ENCODE measurements at regions of chr2 and their contacts with region 1.

Region 1: DNA sequence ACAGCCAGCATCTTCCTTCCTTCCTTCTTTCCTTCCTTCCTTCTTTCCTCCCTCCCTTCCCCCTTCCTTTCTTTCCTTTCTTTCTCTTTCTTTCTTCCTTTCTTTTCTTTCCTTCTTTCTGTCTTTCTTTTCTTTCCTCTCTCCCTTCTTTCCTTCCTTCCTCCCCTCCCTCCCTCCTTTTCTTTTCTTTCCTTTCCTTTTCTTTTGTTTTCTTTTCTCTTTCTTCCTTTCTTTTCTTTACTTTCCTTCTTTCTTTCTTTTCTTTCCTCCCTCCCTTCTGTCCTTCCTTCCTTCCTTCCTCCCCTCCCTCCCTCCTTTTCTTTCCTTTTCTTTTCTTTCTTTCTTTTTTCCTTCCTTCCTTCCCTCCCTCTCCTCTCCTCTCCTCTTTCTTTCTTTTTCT is 296.0 kb upstream of the LRRTM4 start:
- DNase-seq: no peak
- H3K4me3 ChIP-seq: no peak overlapping the region
- H3K27ac ChIP-seq: no peak overlapping the region
- H3K4me1 ChIP-seq: no peaks in the 10 kb centered on the region
- H3K27me3 ChIP-seq: no peaks in the 10 kb centered on the region
- CTCF ChIP-seq: no peak
- POLR2A ChIP-seq: no peak

Region 2: GRCh38 chr2:75949385-75950030 is 1868.7 kb before region 1 on chr2:
- intact Hi-C with region 1: loop called (anchors 5 kb)
- DNase-seq: no peak
- H3K4me3 ChIP-seq: no peak overlapping the region
- H3K27ac ChIP-seq: no peak overlapping the region
- H3K4me1 ChIP-seq: no peaks in the 10 kb centered on the region
- H3K27me3 ChIP-seq: no peaks in the 10 kb centered on the region
- CTCF ChIP-seq: no peak
- POLR2A ChIP-seq: no peak

Region 3: GRCh38 chr2:77521931-77522470 is 296.2 kb before region 1 on chr2 and contains the start of gene LRRTM4:
- intact Hi-C with region 1: no loop called
- DNase-seq: no peak
- H3K4me3 ChIP-seq: no peak within 1 kb of the TSS
- H3K27ac ChIP-seq: no peak within 1 kb of the TSS
- H3K4me1 ChIP-seq: no peaks in the 10 kb centered on the region
- H3K27me3 ChIP-seq: no peaks in the 10 kb centered on the region
- CTCF ChIP-seq: no peak
- POLR2A ChIP-seq: no peak
- total RNA-seq, gene LRRTM4: 0.16 to 1.6 TPM in 2 of 3 donors, not detected in the other

Region 4: DNA sequence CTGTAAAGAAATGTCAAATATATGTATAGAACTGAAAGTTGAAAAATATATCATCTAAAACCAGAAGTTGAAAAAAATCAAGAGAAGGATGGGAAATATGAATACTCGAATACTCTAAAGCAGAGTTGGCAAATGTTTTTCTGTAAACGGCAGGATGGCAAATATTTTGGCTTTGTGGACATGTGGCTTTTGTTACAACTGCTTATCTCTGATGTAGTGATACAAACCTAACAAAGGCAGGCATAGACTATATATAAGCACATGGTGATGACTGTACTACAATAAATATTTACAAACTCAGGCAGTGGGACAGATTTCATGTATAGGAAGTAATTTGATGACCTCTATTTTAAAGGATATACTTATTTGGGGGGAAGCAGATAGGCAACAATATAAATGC is 71.4 kb before region 1 on chr2:
- intact Hi-C with region 1: no loop called
- DNase-seq: no peak
- H3K4me3 ChIP-seq: no peak overlapping the region
- H3K27ac ChIP-seq: no peak overlapping the region
- H3K4me1 ChIP-seq: no peaks in the 10 kb centered on the region
- H3K27me3 ChIP-seq: no peaks in the 10 kb centered on the region
- CTCF ChIP-seq: no peak
- POLR2A ChIP-seq: no peak

Region 5: GRCh38 chr2:77767388-77768076 is 50.7 kb before region 1 on chr2:
- intact Hi-C with region 1: no loop called
- DNase-seq: no peak
- H3K4me3 ChIP-seq: no peak overlapping the region
- H3K27ac ChIP-seq: no peak overlapping the region
- H3K4me1 ChIP-seq: no peaks in the 10 kb centered on the region
- H3K27me3 ChIP-seq: no peaks in the 10 kb centered on the region
- CTCF ChIP-seq: no peak
- POLR2A ChIP-seq: no peak

Region 6: GRCh38 chr2:77834360-77835002 is 16.3 kb after region 1 on chr2:
- intact Hi-C with region 1: no loop called
- DNase-seq: no peak
- H3K4me3 ChIP-seq: no peak overlapping the region
- H3K27ac ChIP-seq: no peak overlapping the region
- H3K4me1 ChIP-seq: no peaks in the 10 kb centered on the region
- H3K27me3 ChIP-seq: no peaks in the 10 kb centered on the region
- CTCF ChIP-seq: no peak
- POLR2A ChIP-seq: no peak